Cardiac septum (tissue), 1 donor: ENCODE measurements at regions of chr1 and their contacts with region 1.

Region 1: DNA sequence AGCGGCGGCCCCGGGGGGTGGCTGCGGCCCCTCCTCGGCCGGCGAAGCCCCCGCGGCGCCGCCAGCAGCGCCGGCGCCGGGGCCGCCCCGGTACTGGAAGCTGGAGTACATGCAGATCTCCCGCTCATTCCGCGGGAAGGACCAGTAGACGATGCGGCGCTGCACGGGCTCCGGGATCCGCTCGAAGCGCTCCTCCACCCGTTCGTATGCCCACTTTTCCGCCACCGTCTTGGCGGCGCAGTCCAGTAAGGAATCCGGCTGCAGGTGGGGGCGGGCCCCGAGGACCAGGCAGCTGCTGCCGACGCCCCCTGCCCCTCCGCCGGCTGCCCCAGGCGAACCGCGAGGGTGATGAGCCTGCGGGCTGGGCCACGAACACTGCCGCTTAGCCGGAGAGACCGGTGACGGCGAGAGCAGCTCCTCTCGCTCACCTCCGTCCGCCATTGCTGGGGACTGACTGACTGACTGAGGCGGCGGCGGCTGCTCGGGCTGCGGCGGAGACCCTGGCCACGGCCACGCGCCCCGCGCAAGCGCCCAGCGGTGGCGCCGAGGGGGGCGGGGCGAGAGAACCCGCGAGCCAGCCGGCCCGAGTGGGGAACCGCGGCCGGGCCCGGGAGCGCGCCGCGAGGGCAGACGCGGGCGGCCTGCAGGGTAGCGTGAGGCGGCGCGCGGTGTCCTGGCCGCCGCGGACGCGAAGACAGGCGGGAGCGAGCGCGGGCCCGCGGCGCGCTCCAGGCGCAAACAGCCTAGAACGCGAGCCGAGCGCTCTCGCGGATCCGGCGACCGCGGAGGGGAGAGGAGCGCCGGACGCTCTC is at the start of gene ZSWIM5:
- DNase-seq: peak; percentile 81
- total RNA-seq, gene ZSWIM5: 1.5 TPM

Region 2: GRCh38 chr1:45490626-45491486 is 284.7 kb after region 1 on chr1 and contains the start of gene TESK2:
- intact Hi-C with region 1: loop called (anchors 10 kb)
- DNase-seq: peak; percentile 98
- total RNA-seq, gene TESK2: 1.0 TPM